ENCODE measurements at regions of chr2 and their contacts with region 1.

Region 1: GRCh38 chr2:148989882-148990493 is 48.5 kb upstream of the LYPD6B start:
- DNase-seq: peak in 3 of 5 donors; percentile 48 to 55 (median 51)
- ATAC-seq: peak; percentile 61 to 92 (median 85)
- H3K4me3 ChIP-seq: no peak overlapping the region
- H3K27ac ChIP-seq: no peak overlapping the region
- H3K4me1 ChIP-seq: no peaks in the 10 kb centered on the region
- H3K27me3 ChIP-seq: no peaks in the 10 kb centered on the region
- CTCF ChIP-seq: peak; percentile 59 to 81 (median 75)
- POLR2A ChIP-seq: no peak

Region 2: DNA sequence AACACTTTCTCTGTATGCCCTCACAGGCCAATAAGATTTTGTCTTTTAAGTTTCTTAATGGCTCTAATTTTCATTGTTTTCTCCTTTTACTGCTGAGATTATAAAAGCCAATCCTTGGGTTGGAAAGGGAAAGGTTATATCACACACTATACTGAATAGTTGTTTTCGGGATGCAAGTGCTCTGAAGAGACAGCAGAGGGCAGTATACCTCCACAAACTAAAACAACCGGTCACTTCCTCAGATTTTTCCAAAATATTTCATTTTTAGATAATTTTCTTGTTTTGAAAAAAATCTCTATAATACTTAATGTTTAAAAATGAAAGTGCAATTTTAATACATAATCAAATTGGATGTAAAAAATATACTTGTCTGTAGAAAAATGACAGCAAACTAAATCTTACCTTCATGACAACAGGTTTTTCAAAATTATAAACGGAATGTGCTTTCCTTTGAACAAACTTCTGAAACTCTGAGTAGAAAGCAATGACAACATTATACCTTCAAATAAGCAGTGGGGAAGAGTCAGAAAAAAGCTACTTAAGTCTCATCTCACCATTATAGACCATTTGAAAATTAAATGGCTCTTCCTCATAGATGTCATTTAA is 1052.1 kb before region 1 on chr2:
- intact Hi-C with region 1: loop called (anchors 2 to 5 kb)
- DNase-seq: no peak
- ATAC-seq: peak in 3 of 4 donors; percentile 55 to 65 (median 62)
- H3K4me3 ChIP-seq: no peak overlapping the region
- H3K27ac ChIP-seq: no peak overlapping the region
- H3K4me1 ChIP-seq: no peaks in the 10 kb centered on the region
- H3K27me3 ChIP-seq: no peaks in the 10 kb centered on the region
- CTCF ChIP-seq: peak; percentile 78 to 95 (median 90)
- POLR2A ChIP-seq: no peak

Region 3: DNA sequence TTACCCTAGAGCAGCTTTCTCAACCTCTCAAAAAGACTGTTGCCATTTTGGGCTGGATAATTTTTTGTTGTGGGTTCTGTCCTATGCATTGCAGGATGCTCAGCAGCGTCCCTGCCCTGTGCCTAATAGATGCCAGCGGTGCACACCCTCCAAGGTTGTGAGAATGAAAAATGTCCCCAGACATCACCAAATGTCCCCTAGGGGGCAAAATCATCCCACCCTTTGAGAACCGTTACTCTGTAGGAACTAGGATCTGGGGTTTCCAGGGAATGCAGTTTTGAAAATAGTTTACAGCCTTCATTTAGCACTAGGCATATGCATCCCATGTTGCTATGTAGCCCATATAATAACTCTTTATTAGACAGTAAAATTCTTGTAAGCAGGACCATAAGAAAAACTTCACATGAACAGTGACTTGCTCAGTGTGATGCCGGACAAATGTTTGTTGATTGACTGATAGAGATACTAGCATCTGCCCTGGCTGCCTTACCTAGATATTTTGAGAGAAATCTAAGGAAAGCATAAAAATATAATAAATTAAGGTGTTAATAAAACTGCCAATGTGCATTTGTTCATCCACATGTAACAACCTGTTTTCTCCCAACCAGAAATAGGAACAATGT is 424.6 kb before region 1 on chr2:
- intact Hi-C with region 1: loop called (anchors 2 to 10 kb)
- DNase-seq: no peak
- ATAC-seq: peak in 3 of 4 donors; percentile 42 to 59 (median 44)
- H3K4me3 ChIP-seq: no peak overlapping the region
- H3K27ac ChIP-seq: no peak overlapping the region
- H3K4me1 ChIP-seq: no peaks in the 10 kb centered on the region
- H3K27me3 ChIP-seq: peaks cover 0 to under 1% (median 0%) of the 10 kb centered on the region in 9 donors
- CTCF ChIP-seq: peak in 11 of 12 donors; percentile 14 to 55 (median 30)
- POLR2A ChIP-seq: no peak

Region 4: GRCh38 chr2:148578493-148578884 is 411.5 kb before region 1 on chr2:
- intact Hi-C with region 1: loop called in 2 of 10 experiments (anchors 5 to 10 kb)
- DNase-seq: no peak
- ATAC-seq: no peak
- H3K4me3 ChIP-seq: no peak overlapping the region
- H3K27ac ChIP-seq: no peak overlapping the region
- H3K4me1 ChIP-seq: peaks cover 0 to 4% (median 0%) of the 10 kb centered on the region in 12 donors
- H3K27me3 ChIP-seq: peaks cover 0 to 8% (median 0%) of the 10 kb centered on the region in 9 donors
- CTCF ChIP-seq: no peak
- POLR2A ChIP-seq: no peak

Region 5: DNA sequence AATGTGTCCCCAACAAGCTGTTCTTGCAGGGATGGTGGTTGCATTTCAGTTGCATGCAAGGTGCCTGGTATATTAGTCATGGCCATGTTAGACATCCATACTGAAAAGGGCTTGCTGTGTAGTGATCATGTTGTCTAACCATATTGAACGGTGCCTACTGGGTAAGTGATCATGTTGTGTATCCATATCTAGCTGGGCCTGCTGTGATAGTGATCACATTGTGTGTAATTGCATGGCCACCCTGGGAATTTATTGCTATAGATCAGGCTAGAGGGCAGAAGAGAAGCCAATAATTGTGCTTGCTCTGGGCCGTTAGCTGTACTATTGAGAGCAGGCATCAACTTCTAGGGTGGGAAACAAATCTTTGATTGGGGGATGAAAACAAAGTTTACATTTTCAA is 355.2 kb before region 1 on chr2:
- intact Hi-C with region 1: loop called in 2 of 10 experiments (anchors 5 kb)
- DNase-seq: no peak
- ATAC-seq: no peak
- H3K4me3 ChIP-seq: no peak overlapping the region
- H3K27ac ChIP-seq: no peak overlapping the region
- H3K4me1 ChIP-seq: no peaks in the 10 kb centered on the region
- H3K27me3 ChIP-seq: no peaks in the 10 kb centered on the region
- CTCF ChIP-seq: no peak
- POLR2A ChIP-seq: no peak

Region 6: GRCh38 chr2:149100739-149101699 is 111.0 kb after region 1 on chr2:
- intact Hi-C with region 1: no loop called
- DNase-seq: no peak
- ATAC-seq: no peak
- H3K4me3 ChIP-seq: no peak overlapping the region
- H3K27ac ChIP-seq: no peak overlapping the region
- H3K4me1 ChIP-seq: no peaks in the 10 kb centered on the region
- H3K27me3 ChIP-seq: no peaks in the 10 kb centered on the region
- CTCF ChIP-seq: no peak
- POLR2A ChIP-seq: no peak

Measured in heart left ventricle (tissue), 16 donors.